Sigmoid colon (tissue), 7 donors: ENCODE measurements at regions of chr2 and their contacts with region 1.

Region 1: DNA sequence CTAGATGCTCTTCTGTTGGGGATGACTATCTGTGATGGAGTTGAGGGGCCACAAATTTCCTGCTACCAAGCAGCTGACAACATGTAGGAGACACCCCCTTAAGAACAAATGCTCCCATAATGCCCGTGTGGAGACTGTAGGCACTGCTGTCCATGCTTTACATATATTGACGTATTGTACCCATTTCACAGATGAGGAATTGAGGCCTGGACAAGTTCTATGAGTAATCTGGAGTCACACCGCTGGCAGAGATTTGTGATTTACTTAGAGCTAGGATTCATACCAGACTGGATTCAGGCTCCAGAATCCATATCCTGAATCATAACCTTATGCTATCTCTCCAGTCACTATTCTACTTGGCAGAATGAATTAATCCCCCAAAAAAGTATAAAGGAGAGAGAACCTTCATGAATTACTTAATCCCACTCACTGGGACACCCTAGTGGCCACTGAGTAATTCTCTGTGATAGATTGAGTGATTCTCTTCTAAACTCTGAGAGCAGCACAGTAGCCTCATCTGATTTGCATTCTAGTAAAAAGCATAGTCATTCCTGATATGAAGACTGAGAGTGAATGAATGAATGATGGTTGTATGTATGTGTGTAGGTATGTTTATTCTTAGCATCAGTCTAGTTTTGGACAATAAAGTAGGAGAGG is 460.7 kb upstream of the MEIS1 start:
- DNase-seq: no peak
- H3K4me3 ChIP-seq: no peak overlapping the region
- H3K27ac ChIP-seq: no peak overlapping the region
- H3K4me1 ChIP-seq: no peaks in the 10 kb centered on the region
- H3K27me3 ChIP-seq: no peaks in the 10 kb centered on the region
- CTCF ChIP-seq: no peak
- EP300 ChIP-seq: no peak
- POLR2A ChIP-seq: no peak

Region 2: GRCh38 chr2:65957886-65958285 is 16.3 kb before region 1 on chr2:
- intact Hi-C with region 1: loop called (anchors 2 kb)
- DNase-seq: no peak
- H3K4me3 ChIP-seq: no peak overlapping the region
- H3K27ac ChIP-seq: no peak overlapping the region
- H3K4me1 ChIP-seq: no peaks in the 10 kb centered on the region
- H3K27me3 ChIP-seq: no peaks in the 10 kb centered on the region
- CTCF ChIP-seq: no peak
- EP300 ChIP-seq: no peak
- POLR2A ChIP-seq: no peak

Region 3: GRCh38 chr2:65991381-65992197 is 17.4 kb after region 1 on chr2:
- intact Hi-C with region 1: no loop called
- DNase-seq: peak; percentile 86
- H3K4me3 ChIP-seq: no peak overlapping the region
- H3K27ac ChIP-seq: no peak overlapping the region
- H3K4me1 ChIP-seq: no peaks in the 10 kb centered on the region
- H3K27me3 ChIP-seq: no peaks in the 10 kb centered on the region
- CTCF ChIP-seq: no peak
- EP300 ChIP-seq: no peak
- POLR2A ChIP-seq: no peak

Region 4: DNA sequence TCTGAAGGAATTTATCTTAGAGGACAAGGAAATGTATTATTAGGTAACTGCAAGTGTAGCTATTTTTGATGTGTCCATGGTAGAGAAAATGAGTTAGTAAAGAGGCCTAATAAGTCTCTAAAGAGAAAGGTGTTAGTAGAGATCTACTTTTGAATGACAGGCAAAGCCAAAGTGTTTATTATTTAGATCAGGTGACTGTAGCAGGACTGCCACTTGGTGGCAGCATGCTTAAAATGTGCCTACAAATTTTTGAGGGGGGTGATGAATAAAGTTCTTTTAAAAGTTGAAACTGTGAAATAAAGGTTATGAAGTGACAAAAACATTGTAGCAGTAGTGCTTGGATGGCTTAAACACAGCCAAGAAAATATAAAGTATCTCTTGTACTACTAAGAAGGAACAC is 39.3 kb after region 1 on chr2:
- intact Hi-C with region 1: no loop called
- DNase-seq: no peak
- H3K4me3 ChIP-seq: no peak overlapping the region
- H3K27ac ChIP-seq: no peak overlapping the region
- H3K4me1 ChIP-seq: no peaks in the 10 kb centered on the region
- H3K27me3 ChIP-seq: no peaks in the 10 kb centered on the region
- CTCF ChIP-seq: no peak
- EP300 ChIP-seq: no peak
- POLR2A ChIP-seq: no peak

Region 5: DNA sequence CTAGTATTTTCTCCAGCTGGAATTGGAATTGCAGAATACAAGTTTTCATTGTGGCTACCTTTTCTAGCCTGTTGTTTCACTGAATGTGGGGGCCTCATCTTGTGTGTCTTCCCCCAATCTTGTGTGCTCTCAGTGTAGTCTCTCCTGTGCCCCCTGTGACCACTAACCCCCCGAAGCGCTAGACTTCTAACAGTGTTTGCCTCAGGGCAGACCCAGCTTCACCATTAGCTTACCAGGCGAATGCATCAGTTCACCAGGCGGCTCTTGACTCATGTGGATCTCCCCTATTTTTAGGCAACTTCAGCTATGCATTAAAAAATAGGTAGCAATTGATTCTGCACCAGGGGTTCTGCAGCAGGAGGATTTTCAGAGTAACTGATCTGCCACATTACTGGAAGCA is 84.5 kb after region 1 on chr2:
- intact Hi-C with region 1: no loop called
- DNase-seq: no peak
- H3K4me3 ChIP-seq: no peak overlapping the region
- H3K27ac ChIP-seq: no peak overlapping the region
- H3K4me1 ChIP-seq: no peaks in the 10 kb centered on the region
- H3K27me3 ChIP-seq: no peaks in the 10 kb centered on the region
- CTCF ChIP-seq: no peak
- EP300 ChIP-seq: no peak
- POLR2A ChIP-seq: no peak